ENCODE measurements at regions of chr6 and their contacts with region 1.

Region 1: GRCh38 chr6:161011492-161012480 is 20.2 kb downstream of the MAP3K4 start:
- DNase-seq: peak; percentile 38
- ATAC-seq: peak; percentile 98
- H3K4me3 Mint-ChIP-seq: peak overlapping the region; percentile 66
- H3K27ac Mint-ChIP-seq: peak overlapping the region; percentile 99
- H3K4me1 Mint-ChIP-seq: peaks cover 77% of the 10 kb centered on the region
- H3K27me3 Mint-ChIP-seq: no peaks in the 10 kb centered on the region
- CTCF ChIP-seq: no peak

Region 2: GRCh38 chr6:160992061-160992979 is 19.5 kb before region 1 on chr6:
- CTCF ChIA-PET with region 1: interaction called, 16 read pairs
- POLR2A ChIA-PET with region 1: interaction called, 4 read pairs
- DNase-seq: peak; percentile 45
- ATAC-seq: peak; percentile 61
- H3K4me3 Mint-ChIP-seq: peak overlapping the region; percentile 97
- H3K27ac Mint-ChIP-seq: peak overlapping the region; percentile 97
- H3K4me1 Mint-ChIP-seq: peaks cover 25% of the 10 kb centered on the region
- H3K27me3 Mint-ChIP-seq: peaks cover 1% of the 10 kb centered on the region; the same call in 1 of the 2 replicates
- CTCF ChIP-seq: peak; percentile 9; the same call in 1 of the 2 replicates

Measured in WTC11 (cell line).